ENCODE measurements at regions of chr1 and their contacts with region 1.

Region 1: GRCh38 chr1:6727535-6727934 is 25.9 kb upstream of the DNAJC11 start:
- DNase-seq: peak; percentile 50 to 82
- H3K4me3 ChIP-seq: no peak overlapping the region
- H3K4me1 ChIP-seq: no peaks in the 10 kb centered on the region
- H3K27me3 ChIP-seq: no peaks in the 10 kb centered on the region

Region 2: GRCh38 chr1:6776895-6777294 is 49.4 kb after region 1 on chr1:
- in situ Hi-C with region 1: no loop called
- DNase-seq: no peak
- H3K4me3 ChIP-seq: no peak overlapping the region
- H3K4me1 ChIP-seq: peaks cover 10% of the 10 kb centered on the region
- H3K27me3 ChIP-seq: no peaks in the 10 kb centered on the region

Region 3: DNA sequence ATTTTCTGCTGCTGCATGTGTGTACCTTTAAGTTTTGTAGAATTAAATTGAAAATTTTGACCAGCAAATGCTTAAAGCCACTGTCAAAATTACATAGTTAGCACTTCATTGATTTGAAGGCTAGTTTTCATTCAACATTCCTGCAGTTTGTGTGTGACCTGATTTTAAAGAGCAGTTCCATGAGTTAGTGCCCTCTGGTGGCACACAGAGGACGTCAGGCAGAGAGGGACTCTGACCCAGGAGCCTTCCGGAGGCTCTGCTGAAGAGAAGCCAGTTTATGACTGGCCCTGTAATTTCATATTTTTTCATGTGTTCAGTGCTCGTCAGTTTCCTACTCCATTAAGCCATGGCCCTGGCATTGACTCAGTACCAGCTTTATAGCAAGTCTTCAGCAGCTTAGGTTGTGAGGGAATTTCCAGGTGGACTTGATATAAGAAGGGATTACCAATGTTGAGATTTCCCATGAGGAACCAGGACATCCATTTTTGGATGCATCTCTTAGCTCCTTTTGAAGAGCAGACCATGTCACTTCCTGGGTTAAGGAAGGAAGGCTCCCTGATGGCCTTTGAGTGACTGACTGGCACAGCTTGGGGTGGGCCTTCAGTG is 162.4 kb after region 1 on chr1:
- in situ Hi-C with region 1: loop called (anchors 10 kb)
- DNase-seq: peak; percentile 61 to 69
- H3K4me3 ChIP-seq: no peak overlapping the region
- H3K4me1 ChIP-seq: peaks cover 10% of the 10 kb centered on the region
- H3K27me3 ChIP-seq: no peaks in the 10 kb centered on the region

Region 4: GRCh38 chr1:7224644-7225043 is 497.1 kb after region 1 on chr1:
- in situ Hi-C with region 1: loop called (anchors 10 kb)
- DNase-seq: no peak
- H3K4me3 ChIP-seq: no peak overlapping the region
- H3K4me1 ChIP-seq: no peaks in the 10 kb centered on the region
- H3K27me3 ChIP-seq: no peaks in the 10 kb centered on the region